ENCODE measurements at regions of chr6 and their contacts with region 1.

Region 1: GRCh38 chr6:25017932-25018567 is 82.3 kb upstream of the RIPOR2 start:
- DNase-seq: peak; percentile 77 to 87 (median 79)
- H3K4me3 ChIP-seq: no peak overlapping the region
- H3K4me3 Mint-ChIP-seq: peak overlapping the region in 5 of 8 donors; percentile 21 to 64 (median 40)
- H3K27ac ChIP-seq: no peak overlapping the region
- H3K27ac Mint-ChIP-seq: peak overlapping the region; percentile 74 to 93 (median 88)
- H3K4me1 ChIP-seq: peaks cover 48% of the 10 kb centered on the region
- H3K4me1 Mint-ChIP-seq: peaks cover 36 to 59% (median 38%) of the 10 kb centered on the region in 4 donors
- H3K27me3 ChIP-seq: no peaks in the 10 kb centered on the region
- H3K27me3 Mint-ChIP-seq: no peaks in the 10 kb centered on the region

Region 2: DNA sequence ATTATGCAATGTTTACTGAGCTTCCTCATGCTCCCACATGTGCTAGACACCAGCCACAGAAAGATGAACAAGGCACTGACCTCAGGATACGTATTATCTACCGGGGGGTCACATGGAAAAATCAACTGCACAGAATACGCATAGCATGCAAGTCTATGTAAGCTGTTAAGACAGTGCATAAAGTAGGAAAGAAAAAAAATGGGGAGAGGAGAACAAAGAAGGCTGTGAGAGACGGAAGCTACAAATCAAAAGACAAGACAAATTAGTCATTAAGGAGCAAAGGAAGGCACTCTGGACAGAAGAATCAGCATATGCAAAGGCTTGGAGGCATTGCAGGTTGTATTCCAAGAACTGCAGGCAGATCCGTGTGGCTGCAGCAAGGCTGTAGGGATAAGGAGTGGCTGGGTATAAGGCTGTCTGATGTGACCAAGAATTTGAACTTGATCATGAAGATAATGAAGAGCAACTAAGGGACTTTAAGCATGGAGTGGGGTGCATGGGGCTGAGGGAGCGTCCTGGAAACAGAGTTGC is 803.1 kb before region 1 on chr6:
- CTCF ChIA-PET with region 1: no interaction called
- POLR2A ChIA-PET with region 1: no interaction called
- intact Hi-C with region 1: no loop called
- DNase-seq: no peak
- H3K4me3 ChIP-seq: no peak overlapping the region
- H3K4me3 Mint-ChIP-seq: no peak overlapping the region
- H3K27ac ChIP-seq: no peak overlapping the region
- H3K27ac Mint-ChIP-seq: no peak overlapping the region
- H3K4me1 ChIP-seq: no peaks in the 10 kb centered on the region
- H3K4me1 Mint-ChIP-seq: no peaks in the 10 kb centered on the region
- H3K27me3 ChIP-seq: no peaks in the 10 kb centered on the region
- H3K27me3 Mint-ChIP-seq: no peaks in the 10 kb centered on the region

Region 3: DNA sequence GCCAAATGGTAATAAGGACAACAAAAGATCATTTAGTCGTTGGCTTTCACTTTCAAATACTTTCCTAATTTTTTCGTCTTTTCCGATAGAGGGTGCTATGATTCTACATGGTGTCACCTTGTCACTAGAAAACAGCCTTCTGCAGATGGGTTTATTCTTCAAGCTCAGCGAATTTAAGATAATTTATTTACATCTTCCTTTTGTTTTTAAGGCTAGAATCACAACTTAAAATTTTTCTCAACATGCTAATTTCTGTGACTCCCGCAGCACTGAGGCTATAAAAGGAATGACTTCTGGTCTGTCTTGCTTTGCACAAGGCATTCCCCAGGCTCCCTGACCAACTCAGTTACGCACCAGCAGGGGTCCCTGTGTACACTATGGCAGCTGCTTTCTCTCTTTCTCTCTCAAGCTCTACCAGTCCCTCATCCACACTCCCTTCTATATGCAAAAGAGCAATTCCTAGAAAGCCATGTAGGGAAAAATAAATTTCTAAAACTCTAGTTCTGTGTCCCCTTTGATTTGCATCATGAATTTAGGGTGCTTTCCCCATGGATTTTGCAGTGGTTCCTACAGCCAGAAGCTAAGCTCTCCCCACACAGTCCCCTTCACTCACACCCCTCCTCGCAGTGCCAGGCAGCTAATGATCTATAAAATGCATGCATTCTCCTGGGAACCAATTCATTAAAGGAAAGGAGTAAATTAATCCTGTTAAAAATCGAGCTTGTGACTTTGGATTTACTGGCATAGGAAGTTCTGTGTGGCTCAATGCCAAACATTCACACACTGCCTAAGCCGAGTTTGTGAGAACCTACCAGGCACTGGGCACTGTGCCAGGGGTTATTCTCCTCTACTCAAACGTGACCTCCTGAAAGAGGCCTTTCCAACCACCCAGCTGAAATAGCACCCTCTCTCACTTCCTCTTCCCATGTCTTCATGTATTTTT is 734.7 kb before region 1 on chr6:
- CTCF ChIA-PET with region 1: no interaction called
- POLR2A ChIA-PET with region 1: no interaction called
- intact Hi-C with region 1: loop called (anchors 10 kb)
- DNase-seq: peak in 4 of 5 donors; percentile 16 to 37 (median 27)
- H3K4me3 ChIP-seq: no peak overlapping the region
- H3K4me3 Mint-ChIP-seq: peak overlapping the region in 6 of 8 donors; percentile 18 to 55 (median 50)
- H3K27ac ChIP-seq: no peak overlapping the region
- H3K27ac Mint-ChIP-seq: no peak overlapping the region
- H3K4me1 ChIP-seq: peaks cover 7% of the 10 kb centered on the region
- H3K4me1 Mint-ChIP-seq: peaks cover 1 to 9% (median 4%) of the 10 kb centered on the region in 4 donors
- H3K27me3 ChIP-seq: no peaks in the 10 kb centered on the region
- H3K27me3 Mint-ChIP-seq: peaks cover 4 to 8% of the 10 kb centered on the region in 2 donors

Region 4: GRCh38 chr6:24699521-24700359 is 318.3 kb before region 1 on chr6:
- CTCF ChIA-PET with region 1: no interaction called
- POLR2A ChIA-PET with region 1: no interaction called
- intact Hi-C with region 1: loop called (anchors 5 kb)
- DNase-seq: no peak
- H3K4me3 ChIP-seq: no peak overlapping the region
- H3K4me3 Mint-ChIP-seq: no peak overlapping the region
- H3K27ac ChIP-seq: no peak overlapping the region
- H3K27ac Mint-ChIP-seq: peak overlapping the region in 5 of 7 donors; percentile 19 to 82 (median 43)
- H3K4me1 ChIP-seq: no peaks in the 10 kb centered on the region
- H3K4me1 Mint-ChIP-seq: peaks cover 5 to 23% (median 13%) of the 10 kb centered on the region in 4 donors
- H3K27me3 ChIP-seq: no peaks in the 10 kb centered on the region
- H3K27me3 Mint-ChIP-seq: no peaks in the 10 kb centered on the region

Region 5: DNA sequence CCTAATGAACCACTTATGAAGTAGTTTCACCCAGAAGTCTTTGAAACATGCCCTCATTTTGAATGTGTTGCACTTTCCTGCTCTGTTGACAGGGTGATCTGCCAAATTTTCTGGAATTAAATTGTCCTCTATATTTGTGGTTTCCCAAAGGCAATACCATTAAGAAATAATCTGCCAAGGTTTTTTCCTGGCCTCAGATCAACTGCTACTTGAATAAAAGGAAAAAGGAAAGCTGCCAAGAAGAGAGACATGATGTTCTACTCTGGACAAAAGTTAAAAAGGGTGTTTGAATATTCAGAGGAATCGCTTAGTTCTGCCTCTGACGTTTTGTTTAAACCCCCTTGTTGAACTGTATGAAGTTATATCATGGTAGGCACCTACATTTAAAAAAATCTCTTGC is 181.9 kb before region 1 on chr6:
- CTCF ChIA-PET with region 1: interaction called, 7 read pairs
- POLR2A ChIA-PET with region 1: interaction called, 11 read pairs
- intact Hi-C with region 1: no loop called
- DNase-seq: no peak
- H3K4me3 ChIP-seq: no peak overlapping the region
- H3K4me3 Mint-ChIP-seq: no peak overlapping the region
- H3K27ac ChIP-seq: no peak overlapping the region
- H3K27ac Mint-ChIP-seq: peak overlapping the region; percentile 6 to 90 (median 48)
- H3K4me1 ChIP-seq: peaks cover 29% of the 10 kb centered on the region
- H3K4me1 Mint-ChIP-seq: peaks cover 34 to 66% (median 39%) of the 10 kb centered on the region in 4 donors
- H3K27me3 ChIP-seq: no peaks in the 10 kb centered on the region
- H3K27me3 Mint-ChIP-seq: no peaks in the 10 kb centered on the region

Region 6: GRCh38 chr6:24872779-24873178 is 145.3 kb before region 1 on chr6:
- CTCF ChIA-PET with region 1: interaction called, 13 read pairs
- POLR2A ChIA-PET with region 1: interaction called, 3 read pairs
- intact Hi-C with region 1: no loop called
- DNase-seq: no peak
- H3K4me3 ChIP-seq: no peak overlapping the region
- H3K4me3 Mint-ChIP-seq: peak overlapping the region in 1 of 8 donors; percentile 19
- H3K27ac ChIP-seq: peak overlapping the region; percentile 19
- H3K27ac Mint-ChIP-seq: peak overlapping the region; percentile 48 to 90 (median 80)
- H3K4me1 ChIP-seq: peaks cover 82% of the 10 kb centered on the region
- H3K4me1 Mint-ChIP-seq: peaks cover 43 to 77% (median 61%) of the 10 kb centered on the region in 4 donors
- H3K27me3 ChIP-seq: no peaks in the 10 kb centered on the region
- H3K27me3 Mint-ChIP-seq: no peaks in the 10 kb centered on the region

Region 7: DNA sequence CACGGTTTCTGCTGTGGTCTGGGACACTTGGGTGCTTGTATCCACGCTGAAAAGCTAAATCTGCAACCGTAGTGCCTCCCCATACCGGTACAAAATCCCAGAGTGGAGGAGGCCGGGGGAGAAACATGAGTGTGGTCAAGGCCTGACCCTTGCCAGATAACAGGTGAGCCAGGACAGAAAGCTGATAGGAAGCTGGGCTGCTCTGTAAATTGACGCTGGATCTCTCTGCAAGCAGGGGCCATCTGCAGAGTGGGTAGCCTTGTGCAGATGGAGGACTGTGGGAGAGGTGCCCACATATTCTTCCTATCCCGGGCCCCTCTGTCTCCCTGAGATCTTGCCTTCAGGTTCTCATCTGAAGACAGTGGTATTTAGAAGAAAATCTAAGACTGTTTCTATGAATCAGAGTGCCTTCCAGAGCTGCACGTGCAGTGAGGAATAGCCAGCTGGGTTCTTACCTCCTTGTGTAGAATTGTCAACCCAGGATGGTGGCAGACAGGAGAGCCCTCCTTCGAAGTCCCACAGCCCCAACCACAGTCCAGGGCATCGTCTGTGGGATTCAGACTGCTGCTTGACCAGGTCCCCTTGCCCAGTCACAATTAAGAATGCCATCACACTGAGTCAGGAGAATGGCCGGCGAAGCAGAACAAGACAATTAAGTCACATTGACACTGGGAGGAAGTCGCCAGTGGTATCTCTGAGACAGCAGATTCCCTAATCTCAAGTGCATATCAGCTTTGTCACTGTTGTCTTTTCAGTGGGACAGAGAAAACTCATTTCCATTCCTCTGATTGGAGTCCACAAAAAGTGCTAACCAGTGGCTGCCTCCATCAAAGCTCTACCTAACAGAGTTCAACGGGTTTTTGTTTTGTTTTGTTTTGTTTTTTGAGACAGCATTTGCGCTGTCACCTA is 17.7 kb after region 1 on chr6:
- CTCF ChIA-PET with region 1: interaction called, 16 read pairs
- POLR2A ChIA-PET with region 1: interaction called, 9 read pairs
- intact Hi-C with region 1: no loop called
- DNase-seq: peak; percentile 34 to 51 (median 37)
- H3K4me3 ChIP-seq: peak overlapping the region; percentile 44 to 68
- H3K4me3 Mint-ChIP-seq: peak overlapping the region; percentile 84 to 93 (median 90)
- H3K27ac ChIP-seq: peak overlapping the region; percentile 69
- H3K27ac Mint-ChIP-seq: peak overlapping the region; percentile 92 to 100 (median 96)
- H3K4me1 ChIP-seq: peaks cover 88% of the 10 kb centered on the region
- H3K4me1 Mint-ChIP-seq: peaks cover 61 to 88% (median 72%) of the 10 kb centered on the region in 4 donors
- H3K27me3 ChIP-seq: no peaks in the 10 kb centered on the region
- H3K27me3 Mint-ChIP-seq: no peaks in the 10 kb centered on the region

Measured in CD4-positive, alpha-beta memory T cell (primary cell).